ENCODE measurements at regions of chr2 and their contacts with region 1.

Region 1: DNA sequence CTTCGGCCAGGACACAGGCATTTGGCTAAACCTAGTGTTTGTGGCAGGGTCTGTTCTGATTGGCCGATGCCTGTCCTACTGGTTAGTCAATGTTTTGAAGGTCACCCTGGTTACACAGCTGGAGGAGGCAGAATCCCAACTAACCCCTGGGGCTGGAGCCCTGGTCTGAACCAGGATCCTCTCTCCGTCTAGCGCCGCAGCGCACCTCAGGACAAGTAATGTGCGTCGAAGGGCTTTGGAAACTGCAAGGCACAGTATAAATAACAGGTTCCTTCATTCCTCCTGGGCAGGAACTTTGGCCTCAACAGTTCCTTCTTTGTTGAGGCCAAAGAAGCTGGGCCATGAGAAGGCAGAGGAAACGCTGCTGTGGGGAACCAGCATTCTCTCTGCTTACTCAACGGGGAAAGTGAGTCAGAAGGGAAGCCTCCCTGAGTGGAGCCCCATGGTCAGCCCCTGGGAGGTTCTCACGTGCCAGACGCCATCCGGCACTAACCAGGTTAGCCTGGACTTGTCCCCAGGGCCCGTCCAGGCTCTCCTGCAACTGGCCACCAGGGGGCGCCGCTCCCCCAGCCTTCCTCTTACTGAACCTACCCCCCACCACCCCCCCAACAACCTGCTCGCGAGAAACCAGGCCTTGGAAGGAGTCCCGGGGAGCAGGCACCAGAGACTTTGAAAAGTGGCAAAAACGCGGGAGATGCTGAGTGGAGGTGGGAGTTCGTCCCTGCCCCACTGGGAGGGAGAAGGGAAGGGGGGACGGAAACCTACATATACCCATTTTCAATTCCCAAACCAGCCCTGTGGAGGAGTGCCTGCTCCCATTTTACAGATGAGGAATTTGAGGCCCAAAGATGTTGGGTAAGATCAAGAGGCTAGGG is 19.8 kb downstream of the TEX44 start:
- DNase-seq: peak; percentile 76 to 90
- H3K4me3 ChIP-seq: peak overlapping the region; percentile 29; the same call in 1 of the 2 replicates
- H3K27ac ChIP-seq: peak overlapping the region; percentile 98
- H3K4me1 ChIP-seq: peaks cover 45% of the 10 kb centered on the region
- H3K27me3 ChIP-seq: no peaks in the 10 kb centered on the region
- CTCF ChIP-seq: peak; percentile 97

Region 2: DNA sequence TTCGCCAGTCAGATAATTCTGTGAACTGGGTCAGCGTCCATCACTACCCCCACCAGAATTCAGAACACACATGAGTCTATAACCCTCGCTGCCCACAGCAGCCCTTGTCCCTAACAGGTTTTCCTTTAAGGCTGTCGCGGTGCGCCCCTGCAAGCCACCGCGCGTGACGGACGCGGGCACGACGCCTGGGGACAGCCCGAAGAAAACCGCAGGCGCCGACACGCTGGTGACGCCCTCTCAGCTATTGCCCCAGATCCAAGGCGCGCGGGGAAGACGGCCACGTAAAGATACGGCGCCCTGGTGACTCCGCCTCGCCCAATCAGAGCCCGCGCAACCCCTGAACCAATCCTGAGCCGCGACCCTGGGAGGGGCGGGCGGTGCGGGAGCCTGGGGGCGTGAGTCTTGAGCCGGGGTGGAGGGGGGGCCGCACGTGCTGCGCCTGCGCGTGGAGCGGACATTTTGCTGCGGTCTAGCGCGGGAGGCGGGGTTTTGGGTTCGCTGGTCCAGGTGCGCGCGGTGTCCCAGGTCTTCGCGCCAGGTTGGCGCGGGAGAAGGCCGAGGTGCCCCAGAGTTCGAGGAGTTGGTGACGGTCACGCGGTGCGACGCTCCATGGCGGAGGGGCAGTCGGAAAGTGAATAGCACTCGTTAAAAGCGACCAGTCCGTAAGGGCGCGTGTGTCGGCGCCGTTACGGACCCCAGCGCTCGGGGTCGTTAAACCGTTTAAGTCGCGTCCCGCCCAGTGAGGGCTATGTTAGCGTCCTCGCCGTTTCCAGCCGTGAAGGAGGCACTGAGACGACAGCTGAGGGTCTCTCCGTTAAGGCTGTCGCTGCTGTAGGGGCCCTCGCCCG is 98.1 kb before region 1 on chr2:
- CTCF ChIA-PET with region 1: no interaction called
- POLR2A ChIA-PET with region 1: interaction called, 3 read pairs
- intact Hi-C with region 1: loop called (anchors 5 kb)
- DNase-seq: peak; percentile 85 to 98
- H3K4me3 ChIP-seq: peak overlapping the region; percentile 91
- H3K27ac ChIP-seq: peak overlapping the region; percentile 70
- H3K4me1 ChIP-seq: peaks cover 15% of the 10 kb centered on the region
- H3K27me3 ChIP-seq: no peaks in the 10 kb centered on the region
- CTCF ChIP-seq: no peak

Region 3: DNA sequence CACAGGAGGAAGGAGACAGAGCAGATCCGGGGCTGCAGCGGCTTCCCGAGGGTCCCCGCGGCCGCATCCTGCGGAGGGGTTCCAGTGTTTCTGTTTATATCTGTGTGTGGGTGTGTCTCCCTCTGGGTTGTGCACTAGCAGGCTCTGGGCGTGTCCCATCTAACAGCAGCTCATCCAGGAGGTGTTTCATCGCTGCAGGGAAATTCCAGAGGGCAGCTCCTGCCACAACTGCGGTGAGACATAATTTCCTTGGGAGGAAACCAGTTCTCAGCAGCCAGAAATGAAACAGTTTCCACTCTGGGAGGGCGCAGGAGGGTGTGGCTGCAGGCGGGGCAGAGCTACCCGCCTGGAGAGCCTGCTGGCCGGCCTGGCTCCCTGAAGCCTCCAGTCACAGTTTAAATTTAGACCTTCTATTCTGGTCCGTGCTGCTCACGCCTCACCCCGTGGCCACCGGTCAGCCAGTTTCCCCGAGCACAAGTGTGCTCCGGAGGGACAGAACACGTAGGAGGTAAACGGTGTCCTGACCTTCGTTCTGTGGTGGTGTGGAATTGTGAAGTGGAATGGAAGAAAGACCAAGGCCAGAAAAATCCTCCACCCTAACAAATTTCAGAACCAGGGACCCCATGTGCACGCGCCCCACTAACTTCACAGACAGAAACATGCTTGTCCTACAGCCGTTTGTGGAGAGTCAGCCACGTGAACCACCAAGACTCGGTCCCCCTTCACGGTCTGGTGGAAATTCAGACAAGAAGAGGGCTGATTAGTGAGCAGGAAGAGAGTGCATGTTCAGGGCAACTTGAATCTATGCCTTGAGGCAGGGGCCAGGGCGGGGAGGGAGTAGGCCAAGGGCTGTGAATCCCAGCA is 30.4 kb after region 1 on chr2:
- CTCF ChIA-PET with region 1: interaction called, 4 read pairs
- POLR2A ChIA-PET with region 1: interaction called, 24 read pairs
- intact Hi-C with region 1: loop called (anchors 1 kb)
- DNase-seq: peak; percentile 95 to 98
- H3K4me3 ChIP-seq: peak overlapping the region; percentile 48; the same call in 1 of the 2 replicates
- H3K27ac ChIP-seq: peak overlapping the region; percentile 98
- H3K4me1 ChIP-seq: peaks cover 64% of the 10 kb centered on the region
- H3K27me3 ChIP-seq: no peaks in the 10 kb centered on the region
- CTCF ChIP-seq: no peak

Region 4: DNA sequence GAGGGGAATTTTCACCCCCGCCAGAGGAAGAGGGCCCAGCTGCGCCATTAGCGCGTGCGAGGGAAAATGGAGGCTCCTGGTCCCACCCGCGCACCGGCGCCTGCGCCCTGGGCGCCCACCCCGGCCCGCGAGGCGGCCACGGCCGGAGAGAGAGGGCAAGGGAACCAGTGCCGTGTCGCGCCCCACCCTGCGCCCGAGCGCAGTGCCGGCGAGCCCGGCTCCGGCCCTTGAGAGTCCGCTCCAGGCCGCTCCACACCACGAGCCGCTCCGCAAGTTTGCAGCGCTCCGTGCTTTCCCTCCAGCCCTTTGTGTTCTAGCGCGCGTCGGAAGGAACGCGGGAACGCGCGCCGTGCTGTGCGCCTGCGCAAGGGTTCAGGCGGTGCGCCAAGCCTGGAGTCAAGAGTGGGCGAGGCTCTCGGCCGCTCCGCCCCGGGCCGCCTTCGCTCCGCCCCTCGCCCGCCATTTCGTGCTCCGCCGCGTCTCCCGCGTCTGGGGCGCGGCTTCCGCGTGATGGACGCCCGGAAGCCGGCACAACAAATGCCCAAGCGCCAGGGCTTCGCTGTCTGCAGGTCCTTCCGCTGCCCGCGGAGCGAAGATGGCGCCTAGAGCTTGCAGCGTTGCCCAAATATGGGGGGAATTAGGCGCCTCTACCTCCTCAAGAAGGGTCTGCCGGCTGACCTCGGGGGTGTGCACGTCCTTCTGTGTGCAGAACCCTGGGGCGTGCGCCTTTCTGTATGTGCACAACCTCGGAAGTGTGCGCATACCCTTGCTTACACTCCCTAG is 49.8 kb after region 1 on chr2:
- CTCF ChIA-PET with region 1: no interaction called
- POLR2A ChIA-PET with region 1: interaction called, 5 read pairs
- intact Hi-C with region 1: loop called (anchors 1 kb)
- DNase-seq: peak; percentile 88 to 98
- H3K4me3 ChIP-seq: peak overlapping the region; percentile 56
- H3K27ac ChIP-seq: peak overlapping the region; percentile 64
- H3K4me1 ChIP-seq: peaks cover 39% of the 10 kb centered on the region
- H3K27me3 ChIP-seq: no peaks in the 10 kb centered on the region
- CTCF ChIP-seq: no peak

Region 5: GRCh38 chr2:231680992-231681853 is 68.8 kb after region 1 on chr2:
- CTCF ChIA-PET with region 1: interaction called, 18 read pairs
- POLR2A ChIA-PET with region 1: interaction called, 10 read pairs
- intact Hi-C with region 1: no loop called
- DNase-seq: peak; percentile 61 to 93
- H3K4me3 ChIP-seq: peak overlapping the region; percentile 60
- H3K27ac ChIP-seq: peak overlapping the region; percentile 92
- H3K4me1 ChIP-seq: peaks cover 24% of the 10 kb centered on the region
- H3K27me3 ChIP-seq: no peaks in the 10 kb centered on the region
- CTCF ChIP-seq: no peak

Region 6: GRCh38 chr2:231713730-231714430 is 101.5 kb after region 1 on chr2:
- CTCF ChIA-PET with region 1: interaction called, 6 read pairs
- POLR2A ChIA-PET with region 1: no interaction called
- intact Hi-C with region 1: loop called (anchors 1 kb)
- DNase-seq: peak; percentile 68 to 91
- H3K4me3 ChIP-seq: no peak overlapping the region
- H3K27ac ChIP-seq: peak overlapping the region; percentile 36; the same call in 1 of the 2 replicates
- H3K4me1 ChIP-seq: peaks cover 30% of the 10 kb centered on the region
- H3K27me3 ChIP-seq: no peaks in the 10 kb centered on the region
- CTCF ChIP-seq: peak; percentile 91

Region 7: GRCh38 chr2:231854671-231855070 is 242.3 kb after region 1 on chr2:
- CTCF ChIA-PET with region 1: no interaction called
- POLR2A ChIA-PET with region 1: no interaction called
- intact Hi-C with region 1: loop called (anchors 5 kb)
- DNase-seq: peak in 1 of 2 experiments; percentile 81
- H3K4me3 ChIP-seq: no peak overlapping the region
- H3K27ac ChIP-seq: no peak overlapping the region
- H3K4me1 ChIP-seq: no peaks in the 10 kb centered on the region
- H3K27me3 ChIP-seq: peaks cover 19% of the 10 kb centered on the region
- CTCF ChIP-seq: no peak